Left ventricle myocardium inferior (tissue), 1 donor: ENCODE measurements at regions of chr13 and their contacts with region 1.

Region 1: GRCh38 chr13:49669735-49670309 is 21.5 kb downstream of the EBPL start:
- DNase-seq: no peak
- H3K4me3 ChIP-seq: no peak overlapping the region
- H3K27ac ChIP-seq: no peak overlapping the region
- H3K4me1 ChIP-seq: peaks cover 6% of the 10 kb centered on the region
- H3K27me3 ChIP-seq: no peaks in the 10 kb centered on the region
- CTCF ChIP-seq: peak; percentile 74

Region 2: GRCh38 chr13:49046002-49046401 is 623.8 kb before region 1 on chr13:
- intact Hi-C with region 1: no loop called
- DNase-seq: no peak
- H3K4me3 ChIP-seq: no peak overlapping the region
- H3K27ac ChIP-seq: no peak overlapping the region
- H3K4me1 ChIP-seq: no peaks in the 10 kb centered on the region
- H3K27me3 ChIP-seq: no peaks in the 10 kb centered on the region
- CTCF ChIP-seq: no peak

Region 3: GRCh38 chr13:49171358-49171757 is 498.5 kb before region 1 on chr13:
- intact Hi-C with region 1: no loop called
- DNase-seq: no peak
- H3K4me3 ChIP-seq: no peak overlapping the region
- H3K27ac ChIP-seq: no peak overlapping the region
- H3K4me1 ChIP-seq: no peaks in the 10 kb centered on the region
- H3K27me3 ChIP-seq: no peaks in the 10 kb centered on the region
- CTCF ChIP-seq: no peak

Region 4: GRCh38 chr13:49840266-49840665 is 170.4 kb after region 1 on chr13:
- intact Hi-C with region 1: loop called (anchors 5 kb)
- DNase-seq: no peak
- H3K4me3 ChIP-seq: no peak overlapping the region
- H3K27ac ChIP-seq: no peak overlapping the region
- H3K4me1 ChIP-seq: no peaks in the 10 kb centered on the region
- H3K27me3 ChIP-seq: no peaks in the 10 kb centered on the region
- CTCF ChIP-seq: no peak